A549 (cell line): ENCODE measurements at regions of chr19 and their contacts with region 1.

Region 1: GRCh38 chr19:42529248-42529764 is 1.0 kb upstream of the CEACAM1 start:
- DNase-seq: peak; percentile 79 to 94
- ATAC-seq: peak; percentile 79 to 95
- H3K4me3 ChIP-seq: no peak overlapping the region
- H3K27ac ChIP-seq: peak overlapping the region; percentile 60 to 63; a peak in 5 of 6 replicates
- H3K4me1 ChIP-seq: peaks cover 12% of the 10 kb centered on the region
- CTCF ChIP-seq: peak; percentile 98
- EP300 ChIP-seq: no peak
- POLR2A ChIP-seq: no peak
- RAD21 ChIP-seq: peak; percentile 98

Region 2: DNA sequence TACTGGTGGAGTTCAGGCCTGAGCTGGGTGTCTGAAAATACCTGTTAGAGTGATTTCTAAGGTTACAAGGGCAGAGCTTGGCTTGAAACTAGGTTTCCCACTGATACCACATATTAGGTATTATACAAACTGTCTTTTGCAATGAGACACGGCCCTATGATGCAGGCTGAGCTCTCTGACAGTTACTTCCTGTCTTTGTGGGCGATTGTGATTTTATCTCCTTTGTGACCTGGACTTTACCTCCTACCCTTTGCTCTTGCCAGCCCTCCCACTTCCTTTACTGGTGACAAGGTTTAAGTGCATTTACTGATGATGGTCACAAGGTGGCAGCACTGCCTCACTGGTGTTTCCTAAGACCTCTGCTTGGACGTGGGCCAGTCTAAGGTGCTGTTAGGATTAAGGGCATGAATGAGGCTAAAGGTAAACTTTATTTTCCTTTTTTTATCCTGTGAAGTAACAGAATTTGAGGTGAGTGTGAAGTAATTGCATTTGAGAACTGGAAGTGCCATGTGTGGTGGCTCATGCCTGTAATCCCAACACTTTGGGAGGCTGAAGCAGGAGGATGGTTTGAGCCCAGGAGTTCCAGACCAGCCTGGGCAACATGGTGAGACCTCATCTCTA is 78.9 kb before region 1 on chr19:
- CTCF ChIA-PET with region 1: interaction called, 352 read pairs
- POLR2A ChIA-PET with region 1: no interaction called
- DNase-seq: peak; percentile 97
- ATAC-seq: peak; percentile 87 to 91
- H3K4me3 ChIP-seq: no peak overlapping the region
- H3K27ac ChIP-seq: peak overlapping the region; percentile 1 to 12; a peak in 3 of 6 replicates
- H3K4me1 ChIP-seq: peaks cover 29% of the 10 kb centered on the region
- CTCF ChIP-seq: peak; percentile 100
- EP300 ChIP-seq: no peak
- POLR2A ChIP-seq: no peak
- RAD21 ChIP-seq: peak; percentile 100

Region 3: GRCh38 chr19:42480335-42481095 is 48.8 kb before region 1 on chr19:
- CTCF ChIA-PET with region 1: interaction called, 11 read pairs
- POLR2A ChIA-PET with region 1: no interaction called
- DNase-seq: peak in 1 of 2 experiments; percentile 78
- ATAC-seq: peak; percentile 65 to 90
- H3K4me3 ChIP-seq: no peak overlapping the region
- H3K27ac ChIP-seq: peak overlapping the region; percentile 32 to 39
- H3K4me1 ChIP-seq: peaks cover 16% of the 10 kb centered on the region
- CTCF ChIP-seq: no peak
- EP300 ChIP-seq: no peak
- POLR2A ChIP-seq: no peak
- RAD21 ChIP-seq: no peak

Region 4: GRCh38 chr19:42514449-42514848 is 14.9 kb before region 1 on chr19:
- CTCF ChIA-PET with region 1: interaction called, 44 read pairs
- POLR2A ChIA-PET with region 1: interaction called, 3 read pairs
- DNase-seq: no peak
- ATAC-seq: no peak
- H3K4me3 ChIP-seq: no peak overlapping the region
- H3K27ac ChIP-seq: no peak overlapping the region
- H3K4me1 ChIP-seq: no peaks in the 10 kb centered on the region
- CTCF ChIP-seq: no peak
- EP300 ChIP-seq: no peak
- POLR2A ChIP-seq: no peak
- RAD21 ChIP-seq: no peak

Region 5: GRCh38 chr19:42553292-42554045 is 24.2 kb after region 1 on chr19:
- CTCF ChIA-PET with region 1: interaction called, 28 read pairs
- POLR2A ChIA-PET with region 1: no interaction called
- DNase-seq: no peak
- ATAC-seq: no peak; a peak in 1 of 6 replicates
- H3K4me3 ChIP-seq: no peak overlapping the region
- H3K27ac ChIP-seq: no peak overlapping the region
- H3K4me1 ChIP-seq: no peaks in the 10 kb centered on the region
- CTCF ChIP-seq: no peak
- EP300 ChIP-seq: no peak
- POLR2A ChIP-seq: no peak
- RAD21 ChIP-seq: no peak

Region 6: GRCh38 chr19:42596391-42597072 is 67.2 kb after region 1 on chr19:
- CTCF ChIA-PET with region 1: interaction called, 22 read pairs
- POLR2A ChIA-PET with region 1: no interaction called
- DNase-seq: peak; percentile 36 to 64
- ATAC-seq: peak; percentile 44 to 90; a peak in 5 of 6 replicates
- H3K4me3 ChIP-seq: no peak overlapping the region
- H3K27ac ChIP-seq: no peak overlapping the region
- H3K4me1 ChIP-seq: no peaks in the 10 kb centered on the region
- CTCF ChIP-seq: peak; percentile 96
- EP300 ChIP-seq: no peak
- POLR2A ChIP-seq: no peak
- RAD21 ChIP-seq: peak; percentile 70 to 77